ENCODE measurements at regions of chr1 and their contacts with region 1.

Region 1: GRCh38 chr1:145777357-145778145 is 46.3 kb downstream of the RNF115 start:
- DNase-seq: no peak
- H3K4me3 ChIP-seq: no peak overlapping the region
- H3K4me1 ChIP-seq: no peaks in the 10 kb centered on the region; the same call in 1 of the 2 replicates
- H3K27me3 ChIP-seq: no peaks in the 10 kb centered on the region

Region 2: DNA sequence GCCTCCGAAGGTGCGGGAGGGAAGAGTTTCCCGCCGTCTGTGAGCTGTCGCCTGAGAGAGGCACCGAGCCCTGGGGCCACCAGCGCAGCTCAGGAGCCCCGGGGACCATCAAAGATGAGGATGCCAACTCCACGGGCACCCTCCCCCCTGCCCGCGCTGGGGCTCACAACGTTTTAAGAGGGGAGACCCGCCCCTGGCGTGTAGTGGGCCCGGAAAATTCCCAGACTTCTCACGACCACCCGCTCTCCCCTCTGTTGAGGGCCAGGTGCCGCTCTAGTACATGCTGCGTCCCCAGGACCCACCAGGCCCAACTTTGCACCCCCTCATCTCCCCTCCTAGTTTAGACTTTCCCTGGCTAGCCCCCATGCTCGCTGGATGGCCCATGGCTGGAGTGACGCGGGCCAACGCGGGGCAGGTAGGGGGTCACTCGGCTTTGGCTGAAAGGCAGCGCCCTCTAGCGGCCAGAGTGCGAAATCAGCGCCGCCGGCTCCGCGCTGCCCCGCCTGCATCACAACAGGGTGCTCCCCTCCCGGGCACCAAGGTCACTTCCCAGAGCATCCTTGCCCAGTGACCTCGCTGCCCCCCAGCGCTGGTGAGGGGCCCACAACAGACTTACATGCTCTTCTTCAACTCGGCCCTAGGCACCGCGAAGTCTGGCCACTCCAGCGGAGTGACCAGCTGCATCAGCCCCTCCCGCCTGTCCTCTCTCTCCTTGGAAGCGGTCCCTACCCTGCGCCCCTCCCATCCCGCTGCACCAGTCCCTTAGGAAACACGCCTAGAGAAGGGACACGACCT is 56.5 kb before region 1 on chr1:
- in situ Hi-C with region 1: loop called (anchors 5 kb)
- DNase-seq: peak; percentile 60 to 84
- H3K4me3 ChIP-seq: no peak overlapping the region
- H3K4me1 ChIP-seq: no peaks in the 10 kb centered on the region; the same call in 1 of the 2 replicates
- H3K27me3 ChIP-seq: no peaks in the 10 kb centered on the region

Measured in HAP-1 (cell line).